K562 (cell line): ENCODE measurements at regions of chr10 and their contacts with region 1.

Region 1: DNA sequence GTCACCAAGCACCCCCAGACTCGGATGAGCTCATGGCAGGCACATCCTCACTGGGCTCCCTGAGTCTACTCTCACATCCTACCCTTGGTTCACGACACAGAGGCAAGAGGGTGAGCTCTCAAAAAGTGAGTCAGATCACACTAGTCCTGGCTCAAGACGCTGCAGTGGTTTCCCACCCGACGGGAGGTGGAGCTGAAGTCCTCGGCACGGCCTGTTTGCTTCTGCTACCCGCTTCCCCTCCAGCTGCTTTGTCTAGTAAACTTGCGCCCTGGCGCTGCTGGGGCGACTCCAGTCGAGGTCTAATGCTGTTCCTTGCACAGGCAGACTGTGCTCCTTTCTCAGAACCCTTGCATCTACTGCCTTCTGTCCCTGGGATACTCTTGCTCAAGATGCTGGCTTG is 13.5 kb upstream of the SFMBT2 start:
- DNase-seq: no peak
- ATAC-seq: peak; percentile 70
- H3K4me3 ChIP-seq: no peak overlapping the region
- H3K27ac ChIP-seq: no peak overlapping the region
- H3K4me1 ChIP-seq: no peaks in the 10 kb centered on the region
- H3K27me3 ChIP-seq: peaks cover 23 to 25% of the 10 kb centered on the region in 2 experiments
- CTCF ChIP-seq: no peak
- EP300 ChIP-seq: no peak
- POLR2A ChIP-seq: no peak
- RAD21 ChIP-seq: no peak

Region 2: DNA sequence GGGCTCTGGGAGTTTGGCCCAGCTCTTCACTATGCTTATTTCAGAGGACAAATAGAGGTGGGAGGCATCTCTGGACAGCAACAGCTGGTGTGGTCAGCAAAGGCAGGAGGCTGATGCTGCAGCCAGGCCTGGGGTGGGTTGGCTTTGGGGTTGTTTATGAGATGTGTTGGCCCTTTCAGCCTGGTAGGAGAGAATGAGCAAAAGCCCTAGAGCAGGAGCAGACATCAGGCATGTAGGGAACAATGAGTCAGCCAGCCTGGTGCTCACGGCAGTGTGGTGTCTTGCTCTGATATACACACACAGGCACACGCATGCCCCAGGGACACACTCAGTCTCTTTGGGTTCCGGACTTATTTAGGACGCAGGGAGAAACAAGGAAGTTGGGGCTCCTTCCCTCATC is 1001.3 kb before region 1 on chr10:
- CTCF ChIA-PET with region 1: no interaction called
- POLR2A ChIA-PET with region 1: no interaction called
- in situ Hi-C with region 1: no loop called
- intact Hi-C with region 1: loop called (anchors 5 kb)
- DNase-seq: no peak
- ATAC-seq: peak; percentile 46; the same call in 1 of the 3 replicates
- H3K4me3 ChIP-seq: no peak overlapping the region
- H3K27ac ChIP-seq: no peak overlapping the region
- H3K4me1 ChIP-seq: no peaks in the 10 kb centered on the region
- H3K27me3 ChIP-seq: 0 out of 5 replicates have a peak, but pooled peaks cover 0 to 2% of the 10 kb centered on the region in 2 experiments
- CTCF ChIP-seq: no peak
- EP300 ChIP-seq: no peak
- POLR2A ChIP-seq: no peak
- RAD21 ChIP-seq: no peak

Region 3: GRCh38 chr10:6912424-6912823 is 511.9 kb before region 1 on chr10:
- CTCF ChIA-PET with region 1: no interaction called
- POLR2A ChIA-PET with region 1: no interaction called
- in situ Hi-C with region 1: loop called (anchors 5 kb)
- intact Hi-C with region 1: no loop called
- DNase-seq: no peak
- ATAC-seq: no peak
- H3K4me3 ChIP-seq: no peak overlapping the region
- H3K27ac ChIP-seq: no peak overlapping the region
- H3K4me1 ChIP-seq: no peaks in the 10 kb centered on the region; a peak in 1 of 5 replicates
- H3K27me3 ChIP-seq: peaks cover 0 to 3% of the 10 kb centered on the region in 2 experiments; a peak in 1 of 5 replicates
- CTCF ChIP-seq: no peak
- EP300 ChIP-seq: no peak
- POLR2A ChIP-seq: no peak
- RAD21 ChIP-seq: no peak